ENCODE measurements at regions of chr2 and their contacts with region 1.

Region 1: GRCh38 chr2:68411397-68412126 is 46.5 kb downstream of the PLEK start:
- DNase-seq: peak; percentile 79
- ATAC-seq: peak; percentile 97
- H3K4me3 ChIP-seq: peak overlapping the region; percentile 24 to 60 (median 45)
- H3K4me3 Mint-ChIP-seq: peak overlapping the region; percentile 78
- H3K27ac ChIP-seq: peak overlapping the region; percentile 83 to 87
- H3K27ac Mint-ChIP-seq: peak overlapping the region; percentile 83
- H3K4me1 ChIP-seq: peaks cover 59 to 66% of the 10 kb centered on the region in 2 donors
- H3K4me1 Mint-ChIP-seq: peaks cover 91% of the 10 kb centered on the region
- H3K27me3 ChIP-seq: no peaks in the 10 kb centered on the region
- H3K27me3 Mint-ChIP-seq: no peaks in the 10 kb centered on the region
- CTCF ChIP-seq: no peak

Region 2: GRCh38 chr2:68423966-68424650 is 12.5 kb after region 1 on chr2:
- CTCF ChIA-PET with region 1: interaction called, 4 read pairs
- POLR2A ChIA-PET with region 1: interaction called, 6 read pairs
- intact Hi-C with region 1: loop called (anchors 1 kb)
- DNase-seq: peak; percentile 74
- ATAC-seq: peak; percentile 81
- H3K4me3 ChIP-seq: peak overlapping the region in 2 of 5 experiments; percentile 3 to 29
- H3K4me3 Mint-ChIP-seq: no peak overlapping the region
- H3K27ac ChIP-seq: peak overlapping the region; percentile 37 to 54
- H3K27ac Mint-ChIP-seq: no peak overlapping the region
- H3K4me1 ChIP-seq: peaks cover 78 to 82% of the 10 kb centered on the region in 2 donors
- H3K4me1 Mint-ChIP-seq: peaks cover 57% of the 10 kb centered on the region
- H3K27me3 ChIP-seq: no peaks in the 10 kb centered on the region
- H3K27me3 Mint-ChIP-seq: no peaks in the 10 kb centered on the region
- CTCF ChIP-seq: no peak

Measured in B cell (primary cell).